HEK293 (cell line): ENCODE measurements at regions of chr9 and their contacts with region 1.

Region 1: GRCh38 chr9:136949817-136950655 is 2.0 kb upstream of the LCN12 start:
- H3K4me3 ChIP-seq: peak overlapping the region; percentile 55
- H3K27ac ChIP-seq: peak overlapping the region; percentile 76
- H3K4me1 ChIP-seq: no peaks in the 10 kb centered on the region; the same call in 1 of the 2 replicates
- CTCF ChIP-seq: peak; percentile 86

Region 2: DNA sequence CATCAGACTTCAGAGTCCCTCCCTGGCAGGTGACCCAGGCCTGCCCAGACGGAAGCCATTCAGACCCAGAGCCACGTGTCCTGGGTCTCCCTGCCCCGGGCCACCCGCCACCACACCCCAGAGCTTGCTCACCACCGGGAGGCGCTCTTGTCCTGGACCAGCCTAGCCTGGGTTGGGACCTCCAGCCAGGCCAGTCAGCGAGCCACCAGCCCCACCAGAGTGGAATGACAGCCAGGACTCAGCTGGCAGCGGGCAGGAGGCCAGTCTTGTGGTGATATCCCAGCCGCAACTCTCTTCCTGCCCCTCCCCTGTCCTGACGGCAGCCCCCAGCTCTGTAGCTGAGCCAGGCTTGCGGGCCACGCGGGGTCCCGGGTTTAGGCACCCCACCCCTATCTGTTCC is 25.6 kb after region 1 on chr9:
- CTCF ChIA-PET with region 1: interaction called, 22 read pairs
- POLR2A ChIA-PET with region 1: interaction called, 7 read pairs
- H3K4me3 ChIP-seq: no peak overlapping the region
- H3K27ac ChIP-seq: no peak overlapping the region
- H3K4me1 ChIP-seq: no peaks in the 10 kb centered on the region
- CTCF ChIP-seq: 0 out of 2 replicates have a peak, but pooled peaks have one; percentile 16

Region 3: GRCh38 chr9:136991993-136992818 is 42.2 kb after region 1 on chr9 and contains the start of gene PAXX:
- CTCF ChIA-PET with region 1: interaction called, 15 read pairs
- POLR2A ChIA-PET with region 1: interaction called, 24 read pairs
- H3K4me3 ChIP-seq: peak within 1 kb of the TSS; percentile 72
- H3K27ac ChIP-seq: peak within 1 kb of the TSS; percentile 83
- H3K4me1 ChIP-seq: peaks cover 5% of the 10 kb centered on the region
- CTCF ChIP-seq: peak; percentile 33; the same call in 1 of the 2 replicates

Region 4: GRCh38 chr9:137000177-137000883 is 50.3 kb after region 1 on chr9:
- CTCF ChIA-PET with region 1: interaction called, 15 read pairs
- POLR2A ChIA-PET with region 1: interaction called, 8 read pairs
- H3K4me3 ChIP-seq: no peak overlapping the region
- H3K27ac ChIP-seq: no peak overlapping the region
- H3K4me1 ChIP-seq: peaks cover 5% of the 10 kb centered on the region
- CTCF ChIP-seq: no peak

Region 5: GRCh38 chr9:137021979-137022619 is 72.1 kb after region 1 on chr9:
- CTCF ChIA-PET with region 1: interaction called, 20 read pairs
- POLR2A ChIA-PET with region 1: interaction called, 6 read pairs
- H3K4me3 ChIP-seq: no peak overlapping the region
- H3K27ac ChIP-seq: no peak overlapping the region
- H3K4me1 ChIP-seq: no peaks in the 10 kb centered on the region; the same call in 1 of the 2 replicates
- CTCF ChIP-seq: no peak

Region 6: DNA sequence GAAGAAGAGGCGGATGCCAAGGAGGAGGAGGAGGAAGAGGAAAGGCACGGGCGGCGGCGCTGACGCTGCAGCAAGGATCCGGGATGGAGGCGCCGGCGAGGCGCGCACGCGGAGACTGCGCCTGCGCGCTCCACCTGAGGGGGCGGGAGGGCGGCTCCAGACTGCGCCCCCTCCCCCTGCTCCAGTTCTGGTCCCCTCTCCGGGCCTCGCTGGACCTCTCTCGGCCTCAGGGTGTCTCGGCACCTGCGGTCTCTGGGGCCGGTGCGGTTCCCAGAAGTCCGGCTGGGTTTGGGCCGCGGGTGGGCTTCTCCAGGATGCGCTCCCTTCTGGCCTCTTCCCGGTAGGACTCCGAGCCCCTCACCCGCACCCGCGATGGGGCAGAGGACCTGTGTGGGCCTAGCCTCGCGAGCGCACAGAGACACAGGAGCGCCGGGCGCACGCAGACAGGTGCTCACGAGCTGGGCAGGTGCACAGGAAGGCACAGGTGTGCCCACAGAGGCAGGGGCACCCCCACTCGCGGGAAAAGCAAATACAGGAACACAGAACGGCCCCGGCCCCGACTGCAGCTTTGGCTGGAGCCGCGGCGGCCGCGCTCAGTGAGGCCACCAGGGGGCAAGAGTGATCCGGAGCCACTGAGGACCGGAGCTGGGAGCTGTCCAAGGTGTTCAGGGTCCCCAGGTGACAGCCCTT is 96.2 kb after region 1 on chr9 and contains the start of gene NPDC1:
- CTCF ChIA-PET with region 1: interaction called, 11 read pairs
- POLR2A ChIA-PET with region 1: no interaction called
- H3K4me3 ChIP-seq: peak within 1 kb of the TSS; percentile 58
- H3K27ac ChIP-seq: peak within 1 kb of the TSS; percentile 79; the same call in 1 of the 2 replicates
- H3K4me1 ChIP-seq: peaks cover 5% of the 10 kb centered on the region; the same call in 1 of the 2 replicates
- CTCF ChIP-seq: peak; percentile 87

Region 7: DNA sequence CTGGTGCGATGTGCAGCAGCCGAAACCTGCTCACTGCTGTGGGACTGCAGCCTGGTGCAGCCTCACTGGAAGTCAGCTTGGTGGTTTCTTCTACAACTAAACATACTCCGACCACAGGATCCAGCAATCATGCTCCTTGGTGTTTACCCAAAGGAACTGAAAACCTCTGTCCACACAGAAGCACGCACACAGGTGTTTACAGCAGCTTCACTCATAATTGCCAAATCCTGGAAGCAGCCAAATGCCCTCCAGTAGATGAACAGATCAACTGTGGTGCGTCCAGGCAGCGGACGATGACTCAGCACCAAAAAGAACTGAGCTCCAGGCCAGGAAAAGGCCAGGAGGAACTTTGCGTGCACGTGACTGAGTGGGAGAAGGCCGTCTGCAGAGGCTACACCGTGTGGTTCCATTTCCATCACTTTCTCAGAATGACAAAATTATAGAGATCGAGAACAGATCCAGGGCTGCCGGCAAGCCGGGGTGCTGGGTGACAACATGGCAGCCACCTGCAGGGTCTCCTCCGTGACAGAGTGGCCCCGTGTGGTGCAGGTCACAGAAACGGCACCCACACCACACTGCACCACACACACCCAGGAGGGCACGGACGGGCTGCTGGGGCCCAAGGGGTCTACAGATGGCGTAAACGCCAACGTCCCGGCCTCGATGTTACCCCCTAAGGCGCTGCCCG is 532.2 kb after region 1 on chr9:
- CTCF ChIA-PET with region 1: no interaction called
- POLR2A ChIA-PET with region 1: no interaction called
- H3K4me3 ChIP-seq: no peak overlapping the region
- H3K27ac ChIP-seq: no peak overlapping the region
- H3K4me1 ChIP-seq: no peaks in the 10 kb centered on the region
- CTCF ChIP-seq: no peak